GM12878 (cell line): ENCODE measurements at regions of chr3 and their contacts with region 1.

Region 1: GRCh38 chr3:31531992-31532586 is 636 bp upstream of the STT3B start:
- DNase-seq: peak; percentile 86
- ATAC-seq: peak; percentile 91
- H3K4me3 ChIP-seq: peak overlapping the region; percentile 92
- H3K27ac ChIP-seq: peak overlapping the region; percentile 92
- H3K4me1 ChIP-seq: peaks cover 6% of the 10 kb centered on the region; the same call in 1 of the 2 replicates
- H3K27me3 ChIP-seq: no peaks in the 10 kb centered on the region
- CTCF ChIP-seq: no peak
- EP300 ChIP-seq: peak; percentile 13 to 30; a peak in 1 of 4 replicates
- POLR2A ChIP-seq: peak; percentile 95
- RAD21 ChIP-seq: no peak

Region 2: DNA sequence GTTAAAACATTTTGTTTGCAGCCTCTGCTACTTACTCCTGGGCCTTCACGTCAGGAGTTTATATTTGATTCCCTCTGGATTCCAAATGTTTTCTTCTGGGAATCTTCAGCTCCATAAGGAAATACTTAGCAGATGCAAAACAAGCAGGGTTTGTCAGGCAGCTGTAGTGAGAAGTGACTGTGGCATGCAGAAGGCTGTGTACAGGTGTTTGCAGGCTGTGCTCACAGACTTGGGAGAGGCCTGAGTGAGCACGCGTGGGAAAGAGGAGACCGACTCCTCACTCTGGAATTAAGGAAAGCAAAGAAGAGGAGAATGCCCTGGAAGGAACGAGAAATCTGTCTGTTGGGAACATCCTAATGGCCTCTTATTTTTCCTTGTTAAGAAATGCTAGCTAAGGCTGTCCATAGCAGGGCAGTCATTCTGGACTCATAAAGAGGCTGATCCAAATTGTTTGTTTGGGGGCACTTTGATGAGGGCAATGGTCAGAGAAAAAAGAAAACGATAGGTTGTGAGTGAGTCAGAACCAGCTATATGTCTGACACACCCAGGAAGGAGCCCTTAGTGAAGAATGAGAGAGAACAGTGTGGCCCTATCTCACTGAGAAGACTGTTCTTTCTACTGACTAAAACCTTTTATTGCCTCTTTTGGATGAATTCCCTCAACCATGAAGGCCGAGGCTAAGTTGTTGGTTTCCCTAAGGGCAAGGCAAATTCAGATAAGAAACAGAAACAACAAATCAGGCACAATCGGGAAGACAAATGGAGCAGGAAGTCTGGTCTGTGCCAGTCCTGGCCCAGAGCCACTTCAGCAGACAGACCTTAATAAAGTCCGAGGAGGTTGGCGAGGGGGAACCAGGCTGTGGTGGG is 843.1 kb before region 1 on chr3:
- CTCF ChIA-PET with region 1: no interaction called
- POLR2A ChIA-PET with region 1: no interaction called
- RAD21 ChIA-PET with region 1: no interaction called
- SMC1A ChIA-PET with region 1: no interaction called
- in situ Hi-C with region 1: no loop called
- intact Hi-C with region 1: no loop called
- DNase-seq: no peak
- ATAC-seq: no peak
- H3K4me3 ChIP-seq: no peak overlapping the region
- H3K27ac ChIP-seq: no peak overlapping the region
- H3K4me1 ChIP-seq: no peaks in the 10 kb centered on the region
- H3K27me3 ChIP-seq: no peaks in the 10 kb centered on the region; a peak in 1 of 4 replicates
- CTCF ChIP-seq: no peak
- EP300 ChIP-seq: no peak
- POLR2A ChIP-seq: no peak
- RAD21 ChIP-seq: no peak

Region 3: GRCh38 chr3:31213869-31214486 is 318.1 kb before region 1 on chr3:
- CTCF ChIA-PET with region 1: no interaction called
- POLR2A ChIA-PET with region 1: interaction called, 5 read pairs
- RAD21 ChIA-PET with region 1: interaction called, 7 read pairs
- SMC1A ChIA-PET with region 1: interaction called, 5 read pairs
- in situ Hi-C with region 1: no loop called
- intact Hi-C with region 1: loop called (anchors 5 kb)
- DNase-seq: peak; percentile 79
- ATAC-seq: peak; percentile 77
- H3K4me3 ChIP-seq: peak overlapping the region; percentile 40; the same call in 1 of the 2 replicates
- H3K27ac ChIP-seq: peak overlapping the region; percentile 67
- H3K4me1 ChIP-seq: peaks cover 31% of the 10 kb centered on the region
- H3K27me3 ChIP-seq: no peaks in the 10 kb centered on the region
- CTCF ChIP-seq: no peak
- EP300 ChIP-seq: peak; percentile 25 to 67; a peak in 2 of 4 replicates
- POLR2A ChIP-seq: no peak
- RAD21 ChIP-seq: no peak

Region 4: GRCh38 chr3:31242026-31242960 is 289.8 kb before region 1 on chr3:
- CTCF ChIA-PET with region 1: interaction called, 4 read pairs
- POLR2A ChIA-PET with region 1: interaction called, 69 read pairs
- RAD21 ChIA-PET with region 1: interaction called, 88 read pairs
- SMC1A ChIA-PET with region 1: interaction called, 56 read pairs
- in situ Hi-C with region 1: loop called (anchors 10 kb)
- intact Hi-C with region 1: loop called (anchors 1 kb)
- DNase-seq: no peak
- ATAC-seq: peak; percentile 62
- H3K4me3 ChIP-seq: no peak overlapping the region
- H3K27ac ChIP-seq: peak overlapping the region; percentile 82
- H3K4me1 ChIP-seq: peaks cover 28% of the 10 kb centered on the region
- H3K27me3 ChIP-seq: no peaks in the 10 kb centered on the region
- CTCF ChIP-seq: no peak
- EP300 ChIP-seq: no peak
- POLR2A ChIP-seq: no peak
- RAD21 ChIP-seq: peak; percentile 40; the same call in 1 of the 2 replicates

Region 5: DNA sequence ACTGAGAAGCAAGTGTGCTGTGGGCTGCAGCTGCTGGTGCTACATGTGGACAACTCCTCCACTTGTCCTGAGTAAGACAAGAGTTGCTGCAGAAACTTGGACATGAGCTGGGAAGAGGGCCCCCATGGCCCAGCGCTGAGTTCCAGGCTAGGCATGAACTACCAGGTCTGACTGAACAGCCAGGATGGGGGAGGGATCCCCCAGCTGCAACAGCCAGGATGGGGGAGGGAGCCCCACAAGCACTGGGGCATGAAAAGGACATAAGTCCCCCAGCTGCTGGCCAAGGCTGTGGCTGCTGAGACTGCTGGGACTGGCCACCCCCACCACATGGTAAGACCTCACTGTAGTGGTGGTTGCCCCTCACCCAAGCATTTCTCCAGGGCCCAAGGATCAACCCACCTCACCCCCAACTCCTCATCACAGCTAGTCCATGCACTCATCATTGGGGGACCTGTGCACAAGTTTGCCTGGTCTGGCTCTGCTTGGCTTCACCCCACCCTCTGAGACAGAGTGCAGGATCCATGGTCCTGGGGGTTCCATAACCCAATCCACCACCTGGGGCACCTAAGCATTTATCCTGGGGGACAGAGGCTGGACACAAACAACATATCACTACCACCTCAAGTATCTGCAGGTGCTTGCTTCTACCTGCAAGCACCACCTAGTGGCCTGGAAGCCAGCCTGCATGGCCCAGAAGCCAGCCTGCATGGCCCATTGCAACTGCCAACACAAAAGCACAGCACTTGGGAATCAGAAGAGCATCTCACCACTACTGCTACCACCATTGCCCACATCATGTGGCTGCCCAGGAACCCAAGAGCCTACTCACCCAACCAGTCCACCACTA is 83.8 kb before region 1 on chr3:
- CTCF ChIA-PET with region 1: no interaction called
- POLR2A ChIA-PET with region 1: interaction called, 3 read pairs
- RAD21 ChIA-PET with region 1: interaction called, 4 read pairs
- SMC1A ChIA-PET with region 1: interaction called, 6 read pairs
- in situ Hi-C with region 1: no loop called
- intact Hi-C with region 1: loop called (anchors 5 kb)
- DNase-seq: no peak
- ATAC-seq: peak; percentile 96
- H3K4me3 ChIP-seq: 0 out of 2 replicates have a peak overlapping the region, but pooled peaks have one; percentile 42
- H3K27ac ChIP-seq: peak overlapping the region; percentile 79
- H3K4me1 ChIP-seq: peaks cover 34% of the 10 kb centered on the region
- H3K27me3 ChIP-seq: no peaks in the 10 kb centered on the region
- CTCF ChIP-seq: peak; percentile 43 to 73 (median 67)
- EP300 ChIP-seq: no peak
- POLR2A ChIP-seq: no peak
- RAD21 ChIP-seq: peak; percentile 71

Region 6: GRCh38 chr3:31544634-31545033 is 12.5 kb after region 1 on chr3:
- CTCF ChIA-PET with region 1: interaction called, 15 read pairs
- POLR2A ChIA-PET with region 1: interaction called, 15 read pairs
- RAD21 ChIA-PET with region 1: interaction called, 26 read pairs
- SMC1A ChIA-PET with region 1: interaction called, 24 read pairs
- in situ Hi-C with region 1: no loop called
- intact Hi-C with region 1: no loop called
- DNase-seq: no peak
- ATAC-seq: no peak
- H3K4me3 ChIP-seq: no peak overlapping the region
- H3K27ac ChIP-seq: no peak overlapping the region
- H3K4me1 ChIP-seq: no peaks in the 10 kb centered on the region
- H3K27me3 ChIP-seq: no peaks in the 10 kb centered on the region
- CTCF ChIP-seq: no peak
- EP300 ChIP-seq: no peak
- POLR2A ChIP-seq: no peak
- RAD21 ChIP-seq: no peak

Region 7: GRCh38 chr3:31768479-31769123 is 236.5 kb after region 1 on chr3:
- CTCF ChIA-PET with region 1: interaction called, 4 read pairs
- POLR2A ChIA-PET with region 1: no interaction called
- RAD21 ChIA-PET with region 1: interaction called, 5 read pairs
- SMC1A ChIA-PET with region 1: interaction called, 3 read pairs
- in situ Hi-C with region 1: no loop called
- intact Hi-C with region 1: loop called (anchors 10 kb)
- DNase-seq: no peak
- ATAC-seq: peak; percentile 74
- H3K4me3 ChIP-seq: no peak overlapping the region
- H3K27ac ChIP-seq: no peak overlapping the region
- H3K4me1 ChIP-seq: no peaks in the 10 kb centered on the region
- H3K27me3 ChIP-seq: no peaks in the 10 kb centered on the region; a peak in 1 of 4 replicates
- CTCF ChIP-seq: peak; percentile 35 to 68 (median 56); a peak in 5 of 6 replicates
- EP300 ChIP-seq: no peak
- POLR2A ChIP-seq: no peak
- RAD21 ChIP-seq: peak; percentile 82